ENCODE measurements at regions of chr10 and their contacts with region 1.

Region 1: GRCh38 chr10:60820093-60820754 is 41.9 kb downstream of the CDK1 start:
- DNase-seq: peak; percentile 63
- H3K4me3 ChIP-seq: no peak overlapping the region
- H3K27me3 ChIP-seq: no peaks in the 10 kb centered on the region
- CTCF ChIP-seq: peak; percentile 71

Region 2: GRCh38 chr10:60964257-60965235 is 144.3 kb after region 1 on chr10:
- CTCF ChIA-PET with region 1: interaction called, 19 read pairs
- POLR2A ChIA-PET with region 1: no interaction called
- DNase-seq: peak; percentile 81
- H3K4me3 ChIP-seq: no peak overlapping the region
- H3K27me3 ChIP-seq: no peaks in the 10 kb centered on the region
- CTCF ChIP-seq: peak; percentile 82

Region 3: GRCh38 chr10:61188691-61189090 is 368.5 kb after region 1 on chr10:
- CTCF ChIA-PET with region 1: interaction called, 18 read pairs
- POLR2A ChIA-PET with region 1: no interaction called
- DNase-seq: no peak
- H3K4me3 ChIP-seq: no peak overlapping the region
- H3K27me3 ChIP-seq: no peaks in the 10 kb centered on the region; the same call in 1 of the 2 replicates
- CTCF ChIP-seq: no peak